ENCODE measurements at regions of chr7 and their contacts with region 1.

Region 1: DNA sequence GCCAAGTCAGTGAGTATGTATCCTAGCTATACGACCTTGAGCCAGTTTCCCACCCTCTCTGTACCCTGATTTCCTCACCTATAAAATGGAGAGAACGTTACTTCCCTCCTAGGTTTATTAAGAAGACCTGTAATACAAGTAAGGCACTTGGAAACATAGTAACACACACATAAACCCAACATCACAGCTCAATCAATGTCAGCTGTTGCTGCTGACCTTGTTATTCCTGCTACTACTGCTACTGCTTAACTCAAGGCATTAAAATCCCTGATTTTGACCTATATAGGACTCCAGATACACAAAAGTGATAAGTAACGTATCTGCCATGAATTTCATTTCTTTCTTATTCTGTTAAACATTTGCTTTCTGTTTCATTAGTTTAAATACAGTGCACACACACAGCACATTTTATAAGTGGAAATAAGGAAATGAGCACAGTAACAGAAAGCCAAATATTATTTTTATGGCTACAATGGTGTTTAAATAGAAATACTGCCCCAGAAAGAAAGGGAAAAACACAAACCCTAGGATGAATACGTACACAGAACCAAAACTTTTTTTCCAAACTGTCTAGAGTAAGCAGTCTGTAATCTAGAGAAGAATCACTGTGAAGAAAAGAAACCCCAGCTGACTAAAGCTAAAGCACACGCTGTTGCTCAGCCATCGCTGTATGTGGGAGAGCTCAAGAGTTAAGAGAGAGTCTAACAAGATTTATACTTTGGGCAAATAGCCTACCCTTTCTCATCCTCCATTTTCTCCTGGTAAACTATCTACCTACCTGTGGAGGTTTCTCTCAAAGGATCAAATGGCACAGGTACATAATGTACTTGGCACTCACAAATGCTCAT is 19.0 kb downstream of the NAPEPLD start:
- DNase-seq: no peak
- H3K4me3 ChIP-seq: no peak overlapping the region
- H3K27ac ChIP-seq: no peak overlapping the region
- H3K4me1 ChIP-seq: peaks cover 5% of the 10 kb centered on the region; the same call in 1 of the 2 replicates
- H3K27me3 ChIP-seq: no peaks in the 10 kb centered on the region
- CTCF ChIP-seq: no peak

Region 2: GRCh38 chr7:103048833-103049232 is 81.1 kb before region 1 on chr7:
- CTCF ChIA-PET with region 1: no interaction called
- POLR2A ChIA-PET with region 1: interaction called, 11 read pairs
- intact Hi-C with region 1: no loop called
- DNase-seq: no peak
- H3K4me3 ChIP-seq: no peak overlapping the region
- H3K27ac ChIP-seq: no peak overlapping the region
- H3K4me1 ChIP-seq: no peaks in the 10 kb centered on the region
- H3K27me3 ChIP-seq: no peaks in the 10 kb centered on the region
- CTCF ChIP-seq: no peak

Region 3: GRCh38 chr7:103113164-103113563 is 16.8 kb before region 1 on chr7:
- CTCF ChIA-PET with region 1: no interaction called
- POLR2A ChIA-PET with region 1: interaction called, 10 read pairs
- intact Hi-C with region 1: no loop called
- DNase-seq: peak; percentile 69 to 73
- H3K4me3 ChIP-seq: no peak overlapping the region
- H3K27ac ChIP-seq: peak overlapping the region; percentile 13
- H3K4me1 ChIP-seq: peaks cover 5% of the 10 kb centered on the region
- H3K27me3 ChIP-seq: no peaks in the 10 kb centered on the region
- CTCF ChIP-seq: no peak

Region 4: GRCh38 chr7:103499907-103500306 is 370.0 kb after region 1 on chr7:
- CTCF ChIA-PET with region 1: no interaction called
- POLR2A ChIA-PET with region 1: no interaction called
- intact Hi-C with region 1: no loop called
- DNase-seq: no peak
- H3K4me3 ChIP-seq: no peak overlapping the region
- H3K27ac ChIP-seq: no peak overlapping the region
- H3K4me1 ChIP-seq: no peaks in the 10 kb centered on the region
- H3K27me3 ChIP-seq: peaks cover 37% of the 10 kb centered on the region
- CTCF ChIP-seq: no peak